Activated CD4-positive, alpha-beta memory T cell treated with anti-CD3 and anti-CD28 coated beads, Interleukin-2, amount 10 ng/mL, durations not matched to agents 7 days and 5 days (primary cell): ENCODE measurements at regions of chr19 and their contacts with region 1.

Region 1: GRCh38 chr19:45439569-45440254 is 16.0 kb upstream of the ERCC1 start:
- DNase-seq: peak; percentile 85
- H3K4me3 Mint-ChIP-seq: peak overlapping the region; percentile 59
- H3K27ac Mint-ChIP-seq: peak overlapping the region; percentile 73
- H3K4me1 Mint-ChIP-seq: peaks cover 36% of the 10 kb centered on the region
- H3K27me3 Mint-ChIP-seq: no peaks in the 10 kb centered on the region

Region 2: GRCh38 chr19:45092747-45093678 is 346.7 kb before region 1 on chr19 and contains the start of gene PPP1R37:
- CTCF ChIA-PET with region 1: no interaction called
- POLR2A ChIA-PET with region 1: no interaction called
- DNase-seq: peak; percentile 92
- H3K4me3 Mint-ChIP-seq: peak within 1 kb of the TSS; percentile 77
- H3K27ac Mint-ChIP-seq: peak within 1 kb of the TSS; percentile 81
- H3K4me1 Mint-ChIP-seq: peaks cover 63% of the 10 kb centered on the region
- H3K27me3 Mint-ChIP-seq: no peaks in the 10 kb centered on the region
- total RNA-seq, gene PPP1R37: 16.3 to 16.4 TPM

Region 3: DNA sequence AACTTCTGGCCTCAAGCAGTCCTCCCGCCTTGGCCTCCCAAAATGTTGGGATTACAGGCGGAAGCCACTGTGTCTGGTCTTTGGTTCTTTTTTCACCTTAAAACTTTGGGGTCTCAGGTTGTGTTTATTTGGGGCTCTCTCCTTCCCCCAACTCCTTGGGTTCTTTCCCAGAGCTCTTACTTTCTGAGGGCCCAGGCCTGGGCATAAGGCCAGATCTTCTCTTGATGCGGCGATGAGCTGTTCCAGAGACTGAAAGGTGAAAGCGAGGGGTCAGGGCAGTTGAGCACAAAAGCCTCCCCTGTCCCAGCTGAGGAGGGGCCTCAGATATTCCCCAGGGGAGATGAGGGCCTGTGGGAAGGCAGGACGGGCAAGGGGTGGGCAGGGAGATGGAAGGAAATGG is 26.2 kb before region 1 on chr19:
- CTCF ChIA-PET with region 1: interaction called, 10 read pairs
- POLR2A ChIA-PET with region 1: no interaction called
- DNase-seq: no peak
- H3K4me3 Mint-ChIP-seq: no peak overlapping the region
- H3K27ac Mint-ChIP-seq: no peak overlapping the region
- H3K4me1 Mint-ChIP-seq: peaks cover 10% of the 10 kb centered on the region
- H3K27me3 Mint-ChIP-seq: no peaks in the 10 kb centered on the region

Region 4: DNA sequence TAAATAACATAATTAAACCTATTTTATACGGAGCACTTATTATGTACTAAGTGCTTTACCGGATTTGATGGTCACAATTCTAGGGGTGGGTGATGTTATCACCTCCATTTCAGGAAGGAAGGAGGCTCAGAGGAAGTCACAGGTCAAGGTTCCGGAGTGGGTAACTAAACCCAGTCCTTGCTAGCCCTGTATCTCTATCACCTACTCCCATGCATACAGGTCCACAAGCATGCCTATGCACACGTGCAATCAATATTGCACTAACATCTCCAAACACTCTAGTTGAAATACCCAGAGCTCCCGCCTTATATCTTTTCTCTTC is 10.3 kb after region 1 on chr19:
- CTCF ChIA-PET with region 1: interaction called, 28 read pairs
- POLR2A ChIA-PET with region 1: interaction called, 12 read pairs
- DNase-seq: peak; percentile 47
- H3K4me3 Mint-ChIP-seq: peak overlapping the region; percentile 91
- H3K27ac Mint-ChIP-seq: peak overlapping the region; percentile 92
- H3K4me1 Mint-ChIP-seq: peaks cover 51% of the 10 kb centered on the region
- H3K27me3 Mint-ChIP-seq: peaks cover 2% of the 10 kb centered on the region

Region 5: GRCh38 chr19:45469132-45469944 is 29.6 kb after region 1 on chr19:
- CTCF ChIA-PET with region 1: interaction called, 311 read pairs
- POLR2A ChIA-PET with region 1: interaction called, 28 read pairs
- DNase-seq: peak; percentile 97
- H3K4me3 Mint-ChIP-seq: peak overlapping the region; percentile 88
- H3K27ac Mint-ChIP-seq: peak overlapping the region; percentile 91
- H3K4me1 Mint-ChIP-seq: peaks cover 29% of the 10 kb centered on the region
- H3K27me3 Mint-ChIP-seq: peaks cover 25% of the 10 kb centered on the region

Region 6: GRCh38 chr19:45485305-45486077 is 45.8 kb after region 1 on chr19:
- CTCF ChIA-PET with region 1: interaction called, 311 read pairs
- POLR2A ChIA-PET with region 1: interaction called, 11 read pairs
- DNase-seq: peak; percentile 99
- H3K4me3 Mint-ChIP-seq: peak overlapping the region; percentile 86
- H3K27ac Mint-ChIP-seq: peak overlapping the region; percentile 78
- H3K4me1 Mint-ChIP-seq: peaks cover 16% of the 10 kb centered on the region
- H3K27me3 Mint-ChIP-seq: peaks cover 7% of the 10 kb centered on the region